Cardiac septum (tissue), 1 donor: ENCODE measurements at regions of chr15 and their contacts with region 1.

Region 1: GRCh38 chr15:45402162-45402954 is 24.0 kb upstream of the GATM start:
- DNase-seq: peak; percentile 99

Region 2: DNA sequence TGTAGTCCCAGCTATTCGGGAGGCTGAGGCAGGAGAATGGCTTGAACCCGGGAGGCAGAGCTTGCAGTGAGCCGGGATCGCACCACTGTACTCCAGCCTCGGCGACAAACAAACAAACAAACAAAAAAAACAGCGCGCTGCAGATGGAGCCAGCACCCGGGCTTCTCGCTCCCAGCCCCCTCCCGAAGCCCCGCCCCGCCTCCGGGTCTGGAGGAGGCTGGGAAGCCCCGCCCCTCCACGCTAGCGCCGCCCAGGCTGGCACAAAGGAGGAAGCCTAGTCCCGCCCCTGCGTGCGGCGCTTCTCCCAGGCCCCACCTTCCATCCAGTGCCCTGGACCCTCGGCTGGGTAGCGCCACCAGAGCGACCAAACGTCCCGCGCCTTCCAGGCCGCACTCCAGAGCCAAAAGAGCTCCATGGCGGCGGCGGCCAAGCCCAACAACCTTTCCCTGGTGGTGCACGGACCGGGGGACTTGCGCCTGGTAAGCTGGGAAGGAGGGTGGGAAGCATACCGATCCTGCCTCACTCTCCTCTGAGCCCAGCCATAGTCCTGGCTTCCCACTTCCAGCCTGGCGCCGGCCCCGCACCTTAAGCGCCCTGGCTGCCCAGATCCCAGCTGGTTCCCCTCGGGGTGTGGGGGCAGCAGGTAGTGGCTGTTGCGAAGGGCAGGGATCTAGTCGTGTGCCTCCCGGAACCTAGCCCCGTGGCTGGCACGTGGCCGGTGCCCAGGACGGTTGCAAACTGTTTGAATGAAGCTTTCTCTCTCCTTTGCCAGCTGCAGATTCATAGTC is 379.3 kb before region 1 on chr15 and contains the start of gene SORD:
- intact Hi-C with region 1: no loop called
- DNase-seq: peak; percentile 98
- total RNA-seq, gene SORD: 4.9 TPM

Region 3: DNA sequence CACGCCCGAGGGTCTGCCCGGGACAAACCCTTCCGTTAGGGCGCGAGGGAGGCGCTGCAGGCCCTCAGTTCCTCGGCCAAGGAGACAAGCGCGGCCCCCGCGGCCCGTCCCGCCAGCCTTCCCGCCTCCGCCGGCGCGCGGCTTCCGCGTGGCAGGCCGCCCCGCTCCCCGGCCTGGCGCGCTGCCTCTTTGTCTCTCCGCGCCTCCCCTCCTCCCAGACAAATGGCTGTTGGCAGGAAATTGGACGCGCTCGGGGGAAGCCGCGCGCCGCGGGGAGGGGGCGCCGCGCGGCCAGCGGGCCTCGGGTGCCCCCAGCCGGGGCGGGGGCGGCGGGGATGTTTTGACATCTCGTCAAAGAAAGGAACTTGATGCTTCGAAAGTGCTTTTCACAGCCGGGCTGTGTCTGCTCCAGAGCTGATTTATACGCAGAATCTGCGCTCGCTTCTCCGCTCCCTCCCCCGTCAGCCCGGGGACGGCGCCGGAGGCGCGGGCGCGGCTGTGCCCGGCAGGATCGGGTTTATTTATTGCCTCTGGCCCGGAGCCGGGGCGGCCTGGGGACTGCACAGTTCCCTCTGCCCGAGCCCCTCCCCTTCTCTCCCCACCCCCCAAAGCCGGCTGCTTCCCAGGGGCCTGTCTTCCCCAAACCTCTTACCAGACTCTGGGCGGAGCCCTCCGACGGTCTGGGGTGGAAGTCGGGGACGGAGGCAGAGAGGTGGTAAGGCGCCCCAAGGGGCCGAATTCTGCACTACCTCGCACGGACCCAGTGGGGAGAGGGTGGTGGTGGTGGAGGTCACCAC is 235.3 kb before region 1 on chr15:
- intact Hi-C with region 1: loop called (anchors 2 kb)
- DNase-seq: peak; percentile 93

Region 4: DNA sequence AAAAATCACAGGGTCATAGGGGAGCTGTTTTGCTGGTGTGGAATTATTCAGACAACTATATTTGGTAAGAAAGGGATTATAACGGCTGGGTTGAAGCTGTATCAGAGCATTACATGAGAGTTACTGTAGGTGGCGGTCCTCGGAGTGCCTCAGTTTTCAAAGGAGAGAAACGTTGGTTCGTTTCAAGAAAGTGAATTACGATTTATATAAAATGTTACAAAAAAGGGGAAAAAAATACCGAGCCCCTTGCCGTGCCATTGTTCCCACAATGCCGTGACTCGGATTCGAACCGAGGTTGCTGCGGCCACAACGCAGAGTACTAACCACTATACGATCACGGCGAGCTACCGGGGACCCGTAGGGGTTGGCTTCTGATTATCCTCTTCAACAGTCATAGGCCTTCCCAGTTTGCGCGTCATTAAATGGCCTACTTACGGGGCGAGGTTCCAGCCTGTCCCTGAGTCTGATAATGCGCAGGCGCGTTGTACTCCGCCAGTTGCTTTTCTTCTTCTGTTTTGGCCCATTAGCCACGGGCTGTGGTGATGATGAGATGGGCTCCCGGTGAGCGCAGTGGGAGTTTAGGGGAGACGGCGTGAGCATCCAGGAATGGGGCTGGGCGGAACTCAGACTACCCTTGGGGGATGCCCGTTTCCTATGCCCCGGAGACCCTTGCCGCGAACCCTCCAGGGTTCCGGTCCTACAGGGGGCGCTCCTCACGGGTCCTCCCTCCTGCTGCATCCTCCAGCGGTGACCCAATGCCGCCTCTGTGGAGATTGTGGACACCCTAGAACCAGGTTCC is 203.8 kb before region 1 on chr15:
- intact Hi-C with region 1: loop called (anchors 2 kb)
- DNase-seq: peak; percentile 95

Region 5: GRCh38 chr15:45307230-45307924 is 95.0 kb before region 1 on chr15:
- intact Hi-C with region 1: loop called (anchors 2 kb)
- DNase-seq: no peak

Region 6: DNA sequence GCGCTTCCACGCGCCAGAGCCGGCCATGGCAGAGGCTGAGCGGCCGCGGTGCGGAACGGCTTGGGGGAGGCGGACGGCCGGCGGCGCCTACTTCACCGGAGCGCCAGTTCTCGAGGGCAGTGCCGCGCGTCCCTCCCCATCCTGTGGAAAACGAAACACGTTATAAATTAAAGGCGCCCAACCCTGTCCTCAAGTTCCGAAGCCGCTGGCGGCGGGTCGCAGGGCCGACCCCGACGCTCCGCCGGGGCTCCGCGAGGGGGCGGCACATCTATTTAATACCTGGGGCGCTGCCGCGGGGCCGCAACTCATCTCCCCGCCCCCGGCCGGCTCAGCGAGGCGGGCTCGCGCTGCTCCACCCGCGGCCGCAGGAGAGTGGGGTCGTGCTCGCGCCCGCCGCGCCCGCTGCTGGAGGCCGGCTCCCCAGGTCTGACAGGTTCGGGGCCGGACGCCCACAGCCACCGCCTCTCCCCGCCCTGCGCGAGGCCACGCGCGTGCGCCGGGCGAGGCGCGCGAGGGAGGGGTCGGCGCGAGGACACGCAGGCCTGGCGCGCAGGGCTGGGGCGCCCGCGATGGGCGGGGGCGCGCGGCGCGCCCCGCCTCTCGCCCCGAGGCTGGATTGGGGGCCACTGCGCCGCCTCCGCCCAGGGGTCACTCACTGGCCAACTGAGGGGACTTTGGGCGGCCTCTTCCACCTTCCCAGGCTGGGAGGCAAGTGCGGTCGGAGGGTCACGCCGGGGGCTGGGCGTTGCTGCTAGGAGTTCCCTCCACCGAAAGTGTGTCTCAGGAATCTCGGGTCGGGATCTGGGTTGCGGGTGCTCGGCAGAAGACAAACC is 120.2 kb after region 1 on chr15 and contains the start of gene SLC30A4:
- intact Hi-C with region 1: loop called (anchors 10 kb)
- DNase-seq: peak; percentile 81
- total RNA-seq, gene SLC30A4: 3.3 TPM

Region 7: DNA sequence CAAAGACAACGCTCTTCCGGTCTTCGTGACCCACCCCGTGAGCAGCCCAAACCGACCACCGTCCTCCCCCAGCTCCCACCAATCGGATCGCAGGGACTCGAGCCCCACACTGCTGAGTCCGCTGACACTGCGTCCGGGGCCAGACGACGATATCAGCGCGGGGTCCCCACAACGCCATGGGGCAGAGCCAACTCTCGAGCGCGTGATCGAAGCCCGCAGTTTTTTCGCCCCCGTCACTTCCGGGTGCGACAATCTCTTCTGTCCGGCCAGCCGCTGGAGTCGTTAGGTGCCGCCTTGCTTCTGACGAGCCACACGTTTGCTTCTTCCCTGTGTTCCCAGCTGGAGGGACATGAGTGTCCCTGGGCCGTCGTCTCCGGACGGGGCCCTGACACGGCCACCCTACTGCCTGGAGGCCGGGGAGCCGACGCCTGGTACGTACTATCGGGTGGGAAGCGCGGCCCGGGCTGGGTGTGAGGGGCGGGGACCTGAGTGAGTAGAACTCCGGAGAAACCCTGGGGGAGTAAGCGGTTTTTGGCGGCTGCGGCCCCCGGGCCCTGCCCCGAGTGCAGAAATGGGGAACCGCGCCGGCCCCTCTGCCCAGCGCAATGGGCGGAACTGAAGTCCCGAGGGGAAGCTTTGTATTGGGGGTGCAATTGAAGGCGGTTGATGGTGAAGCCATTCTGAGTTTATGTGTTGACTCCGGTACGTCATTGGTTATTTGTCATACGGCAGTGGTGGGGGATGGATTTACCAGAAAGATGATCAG is 184.9 kb after region 1 on chr15 and contains the start of gene BLOC1S6:
- intact Hi-C with region 1: loop called (anchors 5 kb)
- DNase-seq: peak; percentile 94
- total RNA-seq, gene BLOC1S6: 29.1 TPM